T-cell (primary cell): ENCODE measurements at regions of chr3 and their contacts with region 1.

Region 1: GRCh38 chr3:15576475-15576874 is 24.9 kb downstream of the HACL1 start:
- DNase-seq: no peak
- ATAC-seq: no peak
- H3K4me3 ChIP-seq: no peak overlapping the region
- H3K4me3 Mint-ChIP-seq: no peak overlapping the region
- H3K27ac ChIP-seq: no peak overlapping the region
- H3K27ac Mint-ChIP-seq: no peak overlapping the region
- H3K4me1 ChIP-seq: no peaks in the 10 kb centered on the region
- H3K4me1 Mint-ChIP-seq: peaks cover 0 to 5% (median 0%) of the 10 kb centered on the region in 3 donors
- H3K27me3 ChIP-seq: no peaks in the 10 kb centered on the region
- H3K27me3 Mint-ChIP-seq: no peaks in the 10 kb centered on the region

Region 2: GRCh38 chr3:14899993-14900618 is 676.4 kb before region 1 on chr3:
- CTCF ChIA-PET with region 1: no interaction called
- POLR2A ChIA-PET with region 1: interaction called in 1 of 2 experiments, 10 read pairs
- DNase-seq: no peak
- ATAC-seq: no peak
- H3K4me3 ChIP-seq: no peak overlapping the region
- H3K4me3 Mint-ChIP-seq: no peak overlapping the region
- H3K27ac ChIP-seq: no peak overlapping the region
- H3K27ac Mint-ChIP-seq: no peak overlapping the region
- H3K4me1 ChIP-seq: no peaks in the 10 kb centered on the region
- H3K4me1 Mint-ChIP-seq: peaks cover 0 to 14% (median 5%) of the 10 kb centered on the region in 3 donors
- H3K27me3 ChIP-seq: peaks cover 0 to 34% of the 10 kb centered on the region in 2 experiments
- H3K27me3 Mint-ChIP-seq: peaks cover 7 to 9% of the 10 kb centered on the region in 2 donors